ENCODE measurements at regions of chr9 and their contacts with region 1.

Region 1: DNA sequence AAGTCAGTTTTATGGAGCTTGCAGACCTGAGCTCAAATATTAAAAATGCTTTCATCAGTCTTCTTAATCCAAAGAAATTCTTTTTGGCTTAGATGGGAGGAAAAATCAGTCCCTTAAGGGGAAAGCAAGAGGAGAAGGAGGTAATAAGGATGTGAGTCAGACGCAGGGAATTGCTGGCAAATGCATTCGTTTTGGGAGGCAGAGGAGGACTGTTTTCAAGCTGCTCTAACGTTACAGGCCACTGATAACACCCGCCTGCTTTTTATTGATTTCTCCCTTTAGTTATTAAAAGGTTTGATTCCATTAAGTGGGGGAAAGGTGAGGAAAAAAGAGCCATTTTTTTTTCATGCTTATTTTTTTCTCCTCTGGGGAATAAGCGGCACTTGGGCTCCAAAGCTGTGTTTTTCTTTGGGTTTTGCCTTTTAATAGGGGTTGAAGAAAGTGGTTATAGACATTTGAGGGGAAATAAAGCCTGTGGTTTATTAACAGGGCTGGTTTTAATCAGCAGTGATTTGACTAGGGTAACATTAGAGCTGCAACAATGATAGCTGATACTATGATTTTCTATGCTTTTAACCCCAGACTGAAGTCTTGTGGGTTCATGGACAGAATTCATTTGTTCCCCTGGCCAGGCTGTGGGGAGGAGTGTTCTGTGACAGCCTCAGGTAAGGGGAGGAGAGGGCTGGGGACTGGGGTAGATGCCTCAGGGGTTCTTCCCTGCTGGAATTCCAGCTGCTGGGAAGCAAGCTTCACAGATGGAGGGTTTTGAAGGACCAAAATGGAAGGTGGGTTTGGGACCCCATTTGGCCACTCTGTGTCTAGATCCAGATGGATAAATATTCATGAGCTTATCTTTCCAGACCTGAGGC is 225.2 kb downstream of the GAS1 start:
- DNase-seq: peak; percentile 31 to 87
- H3K4me3 ChIP-seq: peak overlapping the region; percentile 41; the same call in 1 of the 2 replicates
- H3K27ac ChIP-seq: peak overlapping the region; percentile 96
- H3K4me1 ChIP-seq: peaks cover 43% of the 10 kb centered on the region
- H3K27me3 ChIP-seq: no peaks in the 10 kb centered on the region
- CTCF ChIP-seq: no peak

Region 2: GRCh38 chr9:86645303-86645702 is 76.8 kb before region 1 on chr9:
- CTCF ChIA-PET with region 1: no interaction called
- POLR2A ChIA-PET with region 1: no interaction called
- intact Hi-C with region 1: no loop called
- DNase-seq: no peak
- H3K4me3 ChIP-seq: no peak overlapping the region
- H3K27ac ChIP-seq: no peak overlapping the region
- H3K4me1 ChIP-seq: 0 out of 2 replicates have a peak, but pooled peaks cover 2% of the 10 kb centered on the region
- H3K27me3 ChIP-seq: no peaks in the 10 kb centered on the region
- CTCF ChIP-seq: no peak

Region 3: GRCh38 chr9:86700629-86701028 is 21.4 kb before region 1 on chr9:
- CTCF ChIA-PET with region 1: no interaction called
- POLR2A ChIA-PET with region 1: no interaction called
- intact Hi-C with region 1: no loop called
- DNase-seq: no peak
- H3K4me3 ChIP-seq: no peak overlapping the region
- H3K27ac ChIP-seq: no peak overlapping the region
- H3K4me1 ChIP-seq: peaks cover 10% of the 10 kb centered on the region
- H3K27me3 ChIP-seq: no peaks in the 10 kb centered on the region
- CTCF ChIP-seq: no peak

Region 4: GRCh38 chr9:86749894-86750255 is 27.8 kb after region 1 on chr9:
- CTCF ChIA-PET with region 1: no interaction called
- POLR2A ChIA-PET with region 1: no interaction called
- intact Hi-C with region 1: no loop called
- DNase-seq: no peak
- H3K4me3 ChIP-seq: no peak overlapping the region
- H3K27ac ChIP-seq: no peak overlapping the region
- H3K4me1 ChIP-seq: no peaks in the 10 kb centered on the region
- H3K27me3 ChIP-seq: no peaks in the 10 kb centered on the region
- CTCF ChIP-seq: no peak

Region 5: GRCh38 chr9:86766912-86767311 is 44.8 kb after region 1 on chr9:
- CTCF ChIA-PET with region 1: no interaction called
- POLR2A ChIA-PET with region 1: no interaction called
- intact Hi-C with region 1: loop called (anchors 2 kb)
- DNase-seq: peak; percentile 76 to 95
- H3K4me3 ChIP-seq: no peak overlapping the region; the same call in 1 of the 2 replicates
- H3K27ac ChIP-seq: peak overlapping the region; percentile 82
- H3K4me1 ChIP-seq: peaks cover 25% of the 10 kb centered on the region
- H3K27me3 ChIP-seq: no peaks in the 10 kb centered on the region
- CTCF ChIP-seq: no peak